K562 (cell line): ENCODE measurements at regions of chr1 and their contacts with region 1.

Region 1: GRCh38 chr1:202852163-202852904 is 36.6 kb downstream of the RABIF start:
- DNase-seq: peak; percentile 80 to 86 (median 83)
- ATAC-seq: peak; percentile 97
- H3K4me3 ChIP-seq: no peak overlapping the region
- H3K27ac ChIP-seq: no peak overlapping the region
- H3K4me1 ChIP-seq: peaks cover 0 to 4% of the 10 kb centered on the region in 2 experiments; a peak in 3 of 5 replicates
- H3K27me3 ChIP-seq: no peaks in the 10 kb centered on the region; a peak in 1 of 5 replicates
- CTCF ChIP-seq: peak; percentile 91 to 97 (median 94)
- EP300 ChIP-seq: no peak
- POLR2A ChIP-seq: no peak
- RAD21 ChIP-seq: peak; percentile 74 to 91

Region 2: DNA sequence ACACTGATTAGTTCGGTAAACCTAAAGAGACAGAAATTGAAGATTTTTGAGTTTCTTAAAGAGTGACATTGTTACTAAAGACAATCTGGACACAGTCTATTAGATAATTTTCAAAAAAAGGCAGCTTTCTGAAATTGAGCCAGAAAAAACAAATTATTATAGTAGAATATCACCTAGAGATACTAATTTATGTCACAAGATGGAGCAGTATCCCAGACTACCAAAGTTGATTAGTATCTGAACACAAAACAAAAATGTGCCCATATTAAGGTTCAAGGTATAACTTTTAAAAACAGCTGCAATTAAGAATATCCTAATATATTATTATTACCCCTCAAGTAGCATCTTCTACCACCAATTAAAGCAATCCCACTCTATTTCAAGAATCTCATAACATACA is 101.6 kb before region 1 on chr1:
- CTCF ChIA-PET with region 1: interaction called, 6 read pairs
- POLR2A ChIA-PET with region 1: no interaction called
- in situ Hi-C with region 1: no loop called
- intact Hi-C with region 1: loop called (anchors 2 kb)
- DNase-seq: no peak
- ATAC-seq: no peak
- H3K4me3 ChIP-seq: no peak overlapping the region
- H3K27ac ChIP-seq: no peak overlapping the region
- H3K4me1 ChIP-seq: no peaks in the 10 kb centered on the region
- H3K27me3 ChIP-seq: no peaks in the 10 kb centered on the region
- CTCF ChIP-seq: peak in 1 of 3 experiments; percentile 34; a peak in 2 of 6 replicates
- EP300 ChIP-seq: no peak
- POLR2A ChIP-seq: no peak
- RAD21 ChIP-seq: peak; percentile 9 to 38; a peak in 2 of 4 replicates